Esophagus muscularis mucosa (tissue), 4 donors: ENCODE measurements at regions of chr7 and their contacts with region 1.

Region 1: GRCh38 chr7:27064159-27064558 is 31.6 kb downstream of the HOXA1 start:
- DNase-seq: no peak
- H3K4me3 ChIP-seq: no peak overlapping the region
- H3K27ac ChIP-seq: no peak overlapping the region
- H3K4me1 ChIP-seq: peaks cover 0 to 13% (median 6%) of the 10 kb centered on the region in 4 donors
- H3K27me3 ChIP-seq: no peaks in the 10 kb centered on the region
- CTCF ChIP-seq: no peak
- EP300 ChIP-seq: no peak
- POLR2A ChIP-seq: no peak

Region 2: GRCh38 chr7:26891400-26892355 is 172.5 kb before region 1 on chr7:
- intact Hi-C with region 1: loop called (anchors 10 kb)
- DNase-seq: no peak
- H3K4me3 ChIP-seq: no peak overlapping the region
- H3K27ac ChIP-seq: no peak overlapping the region
- H3K4me1 ChIP-seq: no peaks in the 10 kb centered on the region
- H3K27me3 ChIP-seq: no peaks in the 10 kb centered on the region
- CTCF ChIP-seq: no peak
- EP300 ChIP-seq: no peak
- POLR2A ChIP-seq: no peak